IMR-90 (cell line): ENCODE measurements at regions of chr11 and their contacts with region 1.

Region 1: DNA sequence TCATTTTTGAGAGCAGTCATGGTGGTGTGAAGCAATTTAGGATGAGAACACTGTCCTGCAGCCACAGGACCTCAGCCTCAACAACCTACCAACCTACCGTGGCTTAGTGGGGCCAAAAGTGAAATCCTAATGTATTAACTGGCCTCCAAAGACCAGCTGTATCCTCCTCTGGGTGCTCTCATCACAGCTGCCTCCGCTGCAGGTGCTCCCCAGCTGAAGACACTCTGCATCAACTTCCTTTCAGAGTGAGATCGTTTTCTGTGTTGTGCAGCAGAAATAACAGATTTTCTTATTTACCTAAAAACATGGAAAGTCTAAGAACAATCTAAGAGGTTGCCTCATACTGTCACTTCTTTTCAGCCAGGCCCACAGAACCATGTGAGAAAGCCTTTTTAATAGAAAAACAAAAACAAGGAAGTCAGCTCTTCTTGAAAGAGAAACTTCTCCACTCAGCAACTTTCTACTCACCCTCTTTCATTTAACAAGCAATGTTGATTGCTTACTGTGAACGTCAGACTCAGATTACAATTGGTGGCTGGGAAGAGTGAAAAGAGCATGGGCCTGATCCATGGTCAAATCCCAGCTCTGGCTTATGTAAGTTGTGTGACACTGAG is 136.1 kb downstream of the TENM4 start:
- DNase-seq: no peak
- ATAC-seq: no peak
- H3K4me3 ChIP-seq: no peak overlapping the region
- H3K27ac ChIP-seq: no peak overlapping the region
- H3K4me1 ChIP-seq: no peaks in the 10 kb centered on the region
- H3K27me3 ChIP-seq: no peaks in the 10 kb centered on the region
- CTCF ChIP-seq: no peak
- POLR2A ChIP-seq: no peak
- RAD21 ChIP-seq: no peak

Region 2: GRCh38 chr11:79346021-79346420 is 41.3 kb after region 1 on chr11:
- CTCF ChIA-PET with region 1: no interaction called
- POLR2A ChIA-PET with region 1: no interaction called
- dilution Hi-C with region 1: no loop called
- in situ Hi-C with region 1: no loop called
- intact Hi-C with region 1: loop called (anchors 1 kb)
- DNase-seq: no peak
- ATAC-seq: no peak
- H3K4me3 ChIP-seq: no peak overlapping the region
- H3K27ac ChIP-seq: no peak overlapping the region
- H3K4me1 ChIP-seq: no peaks in the 10 kb centered on the region
- H3K27me3 ChIP-seq: no peaks in the 10 kb centered on the region
- CTCF ChIP-seq: no peak
- POLR2A ChIP-seq: no peak
- RAD21 ChIP-seq: no peak